MCF 10A (cell line): ENCODE measurements at regions of chr6 and their contacts with region 1.

Region 1: DNA sequence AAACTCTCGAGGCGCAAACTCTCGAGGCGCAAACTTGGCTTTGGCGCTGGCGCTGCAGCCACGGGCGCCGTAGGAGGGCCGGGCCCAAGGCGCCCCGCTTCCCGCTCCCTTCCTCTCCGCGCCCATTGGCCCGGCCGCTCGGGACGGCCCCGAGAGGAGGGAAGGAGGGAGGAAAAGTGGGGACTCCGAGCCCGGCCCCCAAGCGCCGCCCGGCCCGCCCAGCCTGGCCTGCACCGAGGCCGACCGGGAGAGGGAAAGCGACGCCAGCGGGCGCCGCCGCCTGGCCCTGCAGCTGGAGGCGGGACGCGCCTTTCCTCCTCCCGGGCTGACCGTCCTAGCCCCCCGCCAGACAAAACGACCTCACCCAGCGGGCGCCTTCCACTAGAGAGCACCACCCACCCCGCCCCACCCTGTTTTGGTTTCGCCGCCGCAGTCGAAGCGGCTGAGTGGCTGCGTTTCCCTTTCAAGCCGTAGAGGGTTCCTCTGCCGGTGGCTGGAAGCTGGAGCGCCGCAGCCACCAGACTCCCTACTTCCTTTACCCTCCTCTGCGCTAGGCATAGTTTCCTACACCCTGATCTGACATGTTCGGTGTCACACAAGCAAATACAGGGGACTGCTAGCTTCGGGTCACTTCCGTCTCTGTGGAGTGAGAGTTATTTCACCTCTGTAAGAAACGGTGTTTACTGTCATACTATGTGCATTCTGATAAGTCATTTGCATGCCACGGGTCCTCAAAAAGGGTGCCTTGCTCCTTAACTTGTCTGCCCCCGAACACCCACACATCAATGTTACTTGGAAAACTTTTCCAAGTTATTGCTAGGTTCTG is at the start of gene MBOAT1:
- DNase-seq: peak; percentile 94
- H3K4me3 Mint-ChIP-seq: peak within 1 kb of the TSS; percentile 86
- H3K27ac Mint-ChIP-seq: peak within 1 kb of the TSS; percentile 78
- H3K4me1 Mint-ChIP-seq: peaks cover 12% of the 10 kb centered on the region
- H3K27me3 Mint-ChIP-seq: no peaks in the 10 kb centered on the region
- CTCF ChIP-seq: no peak
- total RNA-seq, gene MBOAT1: 6.3 and 9.3 TPM in 2 replicates

Region 2: DNA sequence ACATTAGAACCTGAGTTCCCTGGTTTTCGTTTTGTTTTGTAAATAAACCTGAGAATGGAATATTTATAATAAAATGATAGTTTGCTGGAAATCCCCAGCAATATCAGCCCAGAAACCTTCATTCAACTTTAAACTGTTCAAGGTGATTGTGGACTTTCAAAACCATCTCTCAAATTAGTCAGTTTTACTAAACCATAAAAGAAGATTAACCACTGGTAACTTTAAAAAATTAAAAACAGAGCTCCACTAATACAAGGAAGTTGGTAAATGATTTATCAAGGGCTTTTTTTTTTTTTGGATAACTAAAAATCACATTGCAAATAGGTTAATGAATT is 10.3 kb before region 1 on chr6:
- CTCF ChIA-PET with region 1: interaction called, 4 read pairs
- POLR2A ChIA-PET with region 1: interaction called, 38 read pairs
- intact Hi-C with region 1: no loop called
- DNase-seq: no peak
- H3K4me3 Mint-ChIP-seq: no peak overlapping the region
- H3K27ac Mint-ChIP-seq: peak overlapping the region; percentile 89
- H3K4me1 Mint-ChIP-seq: peaks cover 25% of the 10 kb centered on the region
- H3K27me3 Mint-ChIP-seq: no peaks in the 10 kb centered on the region
- CTCF ChIP-seq: no peak

Region 3: GRCh38 chr6:20534295-20535262 is 322.0 kb after region 1 on chr6 and contains the start of gene CDKAL1:
- CTCF ChIA-PET with region 1: interaction called, 5 read pairs
- POLR2A ChIA-PET with region 1: interaction called, 3 read pairs
- intact Hi-C with region 1: loop called (anchors 5 kb)
- DNase-seq: peak; percentile 89
- H3K4me3 Mint-ChIP-seq: peak within 1 kb of the TSS; percentile 86
- H3K27ac Mint-ChIP-seq: peak within 1 kb of the TSS; percentile 92
- H3K4me1 Mint-ChIP-seq: peaks cover 19% of the 10 kb centered on the region
- H3K27me3 Mint-ChIP-seq: no peaks in the 10 kb centered on the region
- CTCF ChIP-seq: no peak
- total RNA-seq, gene CDKAL1: 11.8 and 13.2 TPM in 2 replicates